Pancreas (tissue), 10 donors: ENCODE measurements at regions of chr22 and their contacts with region 1.

Region 1: DNA sequence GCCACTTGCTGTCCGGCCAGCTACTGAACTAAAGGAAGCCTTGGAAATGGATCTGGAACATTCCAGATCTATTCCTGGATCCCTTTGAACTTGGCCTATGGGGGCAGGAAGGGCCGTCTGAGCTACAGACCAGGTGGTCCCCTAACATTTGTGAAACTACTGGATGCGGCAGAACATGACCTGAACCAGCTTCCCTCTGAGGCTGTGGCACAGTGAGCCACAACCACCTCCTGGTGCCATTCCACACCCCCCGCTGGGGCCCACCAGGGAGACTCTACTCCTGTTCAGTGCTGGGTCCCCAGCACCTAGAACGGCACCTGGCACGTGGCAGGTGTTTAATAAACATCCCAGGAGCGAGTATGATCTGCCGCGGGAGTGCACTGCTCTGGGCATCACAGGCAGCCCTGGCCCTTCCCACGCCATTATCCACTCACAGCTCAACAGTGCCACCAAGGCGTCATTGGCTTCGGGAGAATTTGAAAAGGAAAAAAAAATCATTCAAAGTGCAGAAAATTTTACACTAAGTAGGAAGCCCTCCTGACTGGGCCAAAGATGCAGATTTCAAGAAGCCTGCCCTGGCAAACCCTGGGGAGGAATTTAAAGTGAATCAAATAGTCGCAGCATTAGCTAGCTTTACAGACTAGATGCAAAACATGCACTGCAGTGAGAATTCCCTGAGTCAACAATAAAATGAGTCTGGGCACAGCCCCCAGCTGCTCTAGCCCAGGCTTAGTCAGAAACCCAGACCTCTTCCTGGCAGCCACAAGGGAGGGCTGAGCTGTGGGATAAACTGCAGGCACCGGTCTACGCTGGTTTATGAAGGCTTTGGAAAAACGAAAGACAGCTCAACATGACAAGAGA is 14.3 kb upstream of the EFCAB6 start:
- DNase-seq: peak in 5 of 6 donors; percentile 29 to 69 (median 44)
- ATAC-seq: peak in 3 of 4 donors; percentile 59 to 61 (median 60)
- H3K4me3 ChIP-seq: no peak overlapping the region
- H3K27ac ChIP-seq: no peak overlapping the region
- H3K4me1 ChIP-seq: peaks cover 6 to 15% (median 12%) of the 10 kb centered on the region in 3 donors
- H3K27me3 ChIP-seq: no peaks in the 10 kb centered on the region
- CTCF ChIP-seq: peak in 3 of 4 donors; percentile 15 to 19 (median 17)

Region 2: DNA sequence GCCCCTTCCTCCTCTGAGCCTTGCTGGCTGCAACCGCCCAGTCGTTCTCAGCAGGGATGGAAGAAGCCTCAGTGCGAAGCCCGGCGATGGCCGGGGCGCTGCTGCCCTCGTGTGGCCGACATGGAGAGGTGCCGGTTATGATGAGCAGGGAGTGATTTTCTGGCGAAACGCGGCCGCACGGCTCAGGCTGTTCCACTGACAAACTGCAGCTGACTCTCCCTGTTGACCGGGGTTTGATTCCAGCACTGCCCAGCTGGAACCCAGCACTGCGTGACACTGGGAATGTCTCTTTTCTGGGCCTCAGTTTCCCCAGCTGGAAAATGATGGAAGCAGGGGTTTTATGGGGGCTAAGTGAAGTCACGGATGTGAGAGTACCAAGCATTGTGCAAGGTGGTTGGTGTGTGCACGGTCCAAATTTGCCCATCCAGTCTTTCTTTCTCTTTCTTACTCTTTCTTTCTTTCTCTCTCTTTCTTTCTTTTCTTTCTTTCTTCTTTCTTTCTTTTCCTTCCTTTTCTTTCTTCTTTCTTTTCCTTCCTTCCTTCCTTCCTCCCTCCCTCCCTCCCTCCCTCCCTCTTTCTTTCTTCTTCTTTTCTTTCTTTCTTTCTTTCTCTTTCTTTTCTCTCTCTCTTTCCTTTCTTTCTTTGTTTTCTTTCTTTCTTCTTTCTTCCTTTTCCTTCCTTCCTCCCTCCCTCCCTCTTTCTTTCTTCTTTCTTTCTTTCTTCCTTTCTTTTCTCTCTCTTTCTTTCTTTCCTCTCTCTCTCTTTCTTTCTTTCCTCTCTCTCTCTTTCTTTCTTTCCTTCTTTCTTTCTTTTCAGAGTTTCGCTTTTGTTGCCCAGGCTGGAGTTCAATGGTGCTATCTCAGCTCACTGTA is 440.4 kb before region 1 on chr22:
- intact Hi-C with region 1: loop called in 1 of 3 experiments (anchors 5 kb)
- DNase-seq: peak; percentile 63 to 94 (median 82)
- ATAC-seq: peak; percentile 92 to 97 (median 96)
- H3K4me3 ChIP-seq: no peak overlapping the region
- H3K27ac ChIP-seq: no peak overlapping the region
- H3K4me1 ChIP-seq: no peaks in the 10 kb centered on the region
- H3K27me3 ChIP-seq: peaks cover 0 to 4% (median 0%) of the 10 kb centered on the region in 4 donors
- CTCF ChIP-seq: peak; percentile 73 to 92 (median 84)

Region 3: GRCh38 chr22:43643387-43643786 is 183.0 kb before region 1 on chr22:
- intact Hi-C with region 1: no loop called
- DNase-seq: no peak
- ATAC-seq: peak in 1 of 4 donors; percentile 21
- H3K4me3 ChIP-seq: no peak overlapping the region
- H3K27ac ChIP-seq: no peak overlapping the region
- H3K4me1 ChIP-seq: no peaks in the 10 kb centered on the region
- H3K27me3 ChIP-seq: no peaks in the 10 kb centered on the region
- CTCF ChIP-seq: no peak

Region 4: DNA sequence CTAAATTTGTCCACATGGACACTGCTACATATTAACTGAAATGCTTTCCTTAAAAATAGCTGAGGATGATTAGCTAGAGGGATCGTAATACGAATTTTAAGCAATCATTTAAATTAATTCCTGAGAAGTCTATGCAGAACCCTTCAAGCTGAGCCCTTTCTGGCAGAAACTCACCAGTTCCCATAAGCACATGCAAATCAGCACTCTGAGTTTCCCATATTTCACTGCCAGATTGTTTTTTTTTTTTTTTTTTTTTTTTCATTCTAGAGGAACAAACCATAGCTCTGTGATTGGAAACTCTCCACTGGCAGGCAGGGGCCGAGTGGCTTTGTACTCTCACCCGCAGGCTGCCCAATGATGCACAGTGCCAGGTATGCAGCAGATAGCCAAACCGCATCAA is 159.9 kb before region 1 on chr22:
- intact Hi-C with region 1: no loop called
- DNase-seq: no peak
- ATAC-seq: no peak
- H3K4me3 ChIP-seq: no peak overlapping the region
- H3K27ac ChIP-seq: no peak overlapping the region
- H3K4me1 ChIP-seq: no peaks in the 10 kb centered on the region
- H3K27me3 ChIP-seq: no peaks in the 10 kb centered on the region
- CTCF ChIP-seq: no peak

Region 5: DNA sequence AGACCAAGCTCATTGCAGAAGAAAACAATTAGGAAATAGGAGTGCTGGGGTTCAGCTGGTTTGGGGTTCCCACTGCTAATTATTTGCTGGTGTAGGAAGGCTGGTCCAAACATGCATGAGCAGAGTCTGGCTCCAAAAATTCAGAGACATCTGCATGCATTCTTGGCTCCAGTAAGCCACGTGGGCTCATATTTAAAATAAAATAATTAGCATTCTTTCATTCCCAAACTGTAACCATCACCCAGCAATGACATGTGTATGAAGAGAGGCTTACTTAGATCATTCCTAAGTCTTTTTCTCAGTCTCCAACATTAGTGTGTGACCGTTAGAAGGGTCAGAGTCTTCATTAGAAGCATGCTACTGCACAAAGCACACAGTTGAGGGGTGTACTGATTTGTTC is 72.7 kb before region 1 on chr22:
- intact Hi-C with region 1: no loop called
- DNase-seq: no peak
- ATAC-seq: no peak
- H3K4me3 ChIP-seq: no peak overlapping the region
- H3K27ac ChIP-seq: no peak overlapping the region
- H3K4me1 ChIP-seq: no peaks in the 10 kb centered on the region
- H3K27me3 ChIP-seq: no peaks in the 10 kb centered on the region
- CTCF ChIP-seq: no peak

Region 6: GRCh38 chr22:43993027-43993760 is 166.8 kb after region 1 on chr22:
- intact Hi-C with region 1: no loop called
- DNase-seq: peak in 3 of 6 donors; percentile 46 to 67 (median 56)
- ATAC-seq: peak in 3 of 4 donors; percentile 87 to 92 (median 89)
- H3K4me3 ChIP-seq: no peak overlapping the region
- H3K27ac ChIP-seq: no peak overlapping the region
- H3K4me1 ChIP-seq: no peaks in the 10 kb centered on the region
- H3K27me3 ChIP-seq: no peaks in the 10 kb centered on the region
- CTCF ChIP-seq: peak; percentile 78 to 96 (median 88)